Dendritic cell treated with granulocyte-macrophage colony-stimulating factor and Interleukin-4, amounts not matched to agents 40 ng/mL and 50 ng/mL, for 4 days (primary cell): ENCODE measurements at regions of chr15 and their contacts with region 1.

Region 1: DNA sequence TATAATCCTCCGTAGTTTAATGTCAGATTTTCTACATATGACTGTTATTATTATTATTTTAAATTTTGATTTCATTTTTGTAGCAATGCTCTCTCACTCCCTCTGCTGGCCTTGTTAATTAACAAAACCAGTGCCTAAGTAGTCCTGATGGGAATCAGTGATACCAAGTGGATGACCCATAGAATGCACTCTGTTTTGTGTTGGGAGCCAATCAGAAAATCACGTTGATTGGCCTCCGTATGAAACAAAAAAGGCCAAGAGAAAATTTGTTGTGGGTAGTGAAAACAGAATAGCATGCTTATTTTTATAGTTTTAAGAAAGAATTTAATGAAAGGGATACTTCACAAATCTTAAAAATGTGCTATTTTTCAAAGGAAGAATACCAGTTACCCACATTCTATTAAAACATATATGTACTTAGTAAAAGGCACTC is 34.4 kb upstream of the MEIS2 start:
- H3K4me3 Mint-ChIP-seq: no peak overlapping the region
- H3K27ac Mint-ChIP-seq: no peak overlapping the region
- H3K4me1 Mint-ChIP-seq: no peaks in the 10 kb centered on the region
- H3K27me3 Mint-ChIP-seq: peaks cover 9% of the 10 kb centered on the region

Region 2: GRCh38 chr15:35519541-35520149 is 1615.1 kb before region 1 on chr15:
- intact Hi-C with region 1: loop called (anchors 5 kb)
- H3K4me3 Mint-ChIP-seq: no peak overlapping the region
- H3K27ac Mint-ChIP-seq: no peak overlapping the region
- H3K4me1 Mint-ChIP-seq: no peaks in the 10 kb centered on the region
- H3K27me3 Mint-ChIP-seq: no peaks in the 10 kb centered on the region

Region 3: GRCh38 chr15:36501063-36501678 is 633.5 kb before region 1 on chr15:
- intact Hi-C with region 1: loop called (anchors 2 kb)
- H3K4me3 Mint-ChIP-seq: no peak overlapping the region
- H3K27ac Mint-ChIP-seq: no peak overlapping the region
- H3K4me1 Mint-ChIP-seq: no peaks in the 10 kb centered on the region
- H3K27me3 Mint-ChIP-seq: peaks cover 1% of the 10 kb centered on the region

Region 4: DNA sequence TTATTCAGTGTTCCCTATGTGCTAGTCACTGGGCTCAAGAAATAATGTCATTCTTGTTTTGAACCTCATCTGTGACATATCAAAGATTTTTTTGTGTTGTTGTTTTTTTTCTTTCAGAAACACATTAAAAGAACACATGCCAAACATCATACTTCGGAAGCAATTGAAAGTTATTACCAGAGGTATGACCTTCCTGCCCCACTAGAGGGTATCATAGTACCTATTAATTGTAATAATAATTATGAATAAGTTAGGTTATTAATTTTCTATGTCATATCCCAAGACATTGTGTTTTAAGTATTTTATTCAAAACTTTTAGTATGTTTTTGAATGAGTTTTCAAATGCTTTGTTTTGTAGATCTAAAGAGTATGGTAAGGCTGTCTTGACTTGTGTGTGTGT is 489.6 kb before region 1 on chr15:
- intact Hi-C with region 1: loop called (anchors 10 kb)
- H3K4me3 Mint-ChIP-seq: no peak overlapping the region
- H3K27ac Mint-ChIP-seq: no peak overlapping the region
- H3K4me1 Mint-ChIP-seq: no peaks in the 10 kb centered on the region
- H3K27me3 Mint-ChIP-seq: no peaks in the 10 kb centered on the region

Region 5: DNA sequence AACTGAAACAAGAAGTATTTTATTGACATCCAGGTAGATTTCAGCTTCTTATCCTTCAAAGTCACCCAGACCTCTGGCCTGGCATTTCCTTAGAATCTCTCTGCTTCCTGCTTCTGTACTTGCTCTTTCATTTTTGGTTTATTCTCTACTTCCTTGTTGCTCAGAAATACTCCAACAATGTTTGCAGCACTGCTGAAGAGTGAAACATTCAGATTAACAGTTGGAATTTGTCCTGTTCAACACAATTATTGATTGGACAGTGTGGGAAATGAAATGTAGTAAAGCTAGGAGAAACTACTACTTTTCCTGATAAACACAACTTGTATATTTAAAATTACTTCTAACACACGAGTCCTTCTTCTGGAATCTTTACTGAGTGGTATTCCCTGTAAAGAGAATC is 46.6 kb after region 1 on chr15:
- intact Hi-C with region 1: no loop called
- H3K4me3 Mint-ChIP-seq: no peak overlapping the region
- H3K27ac Mint-ChIP-seq: no peak overlapping the region
- H3K4me1 Mint-ChIP-seq: no peaks in the 10 kb centered on the region
- H3K27me3 Mint-ChIP-seq: no peaks in the 10 kb centered on the region